Heart right ventricle (tissue), 16 donors: ENCODE measurements at regions of chr18 and their contacts with region 1.

Region 1: DNA sequence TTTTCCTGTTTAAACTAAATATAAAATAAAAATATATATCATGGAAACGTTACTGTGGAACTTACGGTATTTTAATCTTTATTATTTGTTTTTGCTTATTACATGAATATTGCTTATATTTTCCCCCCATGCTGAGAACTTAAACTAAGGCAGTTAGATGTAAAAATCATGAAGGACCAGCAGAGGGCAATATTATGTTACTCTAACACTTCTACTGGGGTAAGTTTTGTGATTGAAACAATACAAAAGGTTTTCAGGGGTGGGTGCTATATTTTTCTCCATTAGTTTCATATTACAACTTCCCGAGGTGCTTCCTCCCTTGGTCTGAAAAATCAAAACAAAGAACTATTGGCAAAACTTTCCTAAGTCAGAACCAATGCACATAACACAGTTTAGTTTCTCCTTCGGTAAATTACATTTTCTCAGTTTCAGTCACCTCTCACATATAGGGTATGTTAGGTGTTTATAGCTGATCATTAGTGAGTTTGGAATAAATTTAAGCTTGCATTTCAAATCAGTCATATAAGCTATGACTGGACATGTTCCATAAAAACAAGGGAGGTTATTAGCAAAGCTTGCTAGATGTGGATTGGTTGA is 54.8 kb downstream of the ZNF407 start:
- DNase-seq: no peak
- ATAC-seq: peak in 2 of 8 donors; percentile 27 to 37
- H3K4me3 ChIP-seq: no peak overlapping the region
- H3K27ac ChIP-seq: no peak overlapping the region
- H3K4me1 ChIP-seq: peaks cover 0 to 4% (median 0%) of the 10 kb centered on the region in 9 donors
- H3K27me3 ChIP-seq: no peaks in the 10 kb centered on the region
- CTCF ChIP-seq: peak; percentile 41 to 76 (median 65)

Region 2: DNA sequence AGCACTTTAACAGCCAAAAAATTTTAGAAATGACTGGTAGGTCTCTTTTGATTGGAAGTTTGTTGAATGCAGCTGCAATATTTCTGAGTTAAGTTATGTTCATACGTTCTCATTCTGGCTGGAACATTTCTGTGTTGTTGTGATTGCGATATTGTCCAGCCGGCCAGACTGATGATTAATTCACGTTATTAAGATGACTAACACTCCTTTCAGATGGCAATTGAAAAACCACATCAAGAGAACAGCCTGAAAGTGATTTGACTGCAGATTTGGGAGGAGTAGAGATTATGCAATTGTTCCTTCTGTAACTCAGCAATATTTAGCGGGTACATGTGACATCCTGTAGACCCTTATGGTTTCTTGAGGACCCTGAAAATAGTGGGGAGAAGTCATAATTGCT is 638.5 kb before region 1 on chr18:
- intact Hi-C with region 1: no loop called
- DNase-seq: no peak
- ATAC-seq: peak in 1 of 8 donors; percentile 70
- H3K4me3 ChIP-seq: no peak overlapping the region
- H3K27ac ChIP-seq: no peak overlapping the region
- H3K4me1 ChIP-seq: peaks cover 0 to 14% (median 0%) of the 10 kb centered on the region in 9 donors
- H3K27me3 ChIP-seq: no peaks in the 10 kb centered on the region
- CTCF ChIP-seq: no peak

Region 3: GRCh38 chr18:74604774-74605173 is 47.7 kb before region 1 on chr18:
- intact Hi-C with region 1: loop called in 1 of 10 experiments (anchors 5 kb)
- DNase-seq: no peak
- ATAC-seq: peak in 7 of 8 donors; percentile 29 to 76 (median 71)
- H3K4me3 ChIP-seq: no peak overlapping the region
- H3K27ac ChIP-seq: peak overlapping the region in 2 of 10 donors; percentile 22 to 45
- H3K4me1 ChIP-seq: peaks cover 0 to 20% (median 5%) of the 10 kb centered on the region in 9 donors
- H3K27me3 ChIP-seq: no peaks in the 10 kb centered on the region
- CTCF ChIP-seq: no peak

Region 4: GRCh38 chr18:74896390-74896991 is 244.0 kb after region 1 on chr18:
- intact Hi-C with region 1: loop called in 1 of 10 experiments (anchors 5 kb)
- DNase-seq: peak in 1 of 2 donors; percentile 12
- ATAC-seq: peak in 6 of 8 donors; percentile 58 to 86 (median 78)
- H3K4me3 ChIP-seq: no peak overlapping the region
- H3K27ac ChIP-seq: no peak overlapping the region
- H3K4me1 ChIP-seq: peaks cover 0 to 26% (median 0%) of the 10 kb centered on the region in 9 donors
- H3K27me3 ChIP-seq: no peaks in the 10 kb centered on the region
- CTCF ChIP-seq: peak in 8 of 9 donors; percentile 26 to 66 (median 58)

Region 5: GRCh38 chr18:74963820-74964446 is 311.4 kb after region 1 on chr18:
- intact Hi-C with region 1: loop called in 7 of 10 experiments (anchors 5 to 10 kb)
- DNase-seq: peak in 1 of 2 donors; percentile 61
- ATAC-seq: peak; percentile 68 to 93 (median 84)
- H3K4me3 ChIP-seq: no peak overlapping the region
- H3K27ac ChIP-seq: no peak overlapping the region
- H3K4me1 ChIP-seq: peaks cover 0 to 11% (median 4%) of the 10 kb centered on the region in 9 donors
- H3K27me3 ChIP-seq: no peaks in the 10 kb centered on the region
- CTCF ChIP-seq: peak in 7 of 9 donors; percentile 42 to 58 (median 52)

Region 6: GRCh38 chr18:75478996-75479880 is 826.7 kb after region 1 on chr18:
- intact Hi-C with region 1: loop called in 9 of 10 experiments (anchors 2 to 10 kb)
- DNase-seq: no peak
- ATAC-seq: peak in 7 of 8 donors; percentile 68 to 85 (median 71)
- H3K4me3 ChIP-seq: no peak overlapping the region
- H3K27ac ChIP-seq: no peak overlapping the region
- H3K4me1 ChIP-seq: no peaks in the 10 kb centered on the region
- H3K27me3 ChIP-seq: no peaks in the 10 kb centered on the region
- CTCF ChIP-seq: peak; percentile 29 to 90 (median 72)

Region 7: DNA sequence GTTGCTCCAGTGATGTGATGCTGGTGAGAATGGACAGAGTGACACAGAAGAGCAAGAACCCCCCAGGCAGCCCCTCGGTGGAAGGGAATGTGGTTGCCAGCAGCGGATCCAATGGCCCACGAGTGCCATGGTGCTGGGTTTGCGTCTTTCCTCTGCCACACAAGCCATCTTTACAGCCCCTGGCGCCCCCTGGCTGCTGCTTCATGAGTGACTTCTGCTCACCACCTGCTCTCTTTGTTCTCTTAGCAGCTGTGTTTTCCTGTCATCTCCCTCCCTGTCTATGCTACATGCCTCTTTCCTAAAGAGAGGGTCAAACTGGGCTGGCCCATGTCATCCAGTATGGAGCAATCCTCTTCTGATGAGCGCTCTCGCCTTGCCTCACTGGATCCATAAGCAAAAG is 1075.0 kb after region 1 on chr18:
- intact Hi-C with region 1: loop called in 3 of 10 experiments (anchors 10 kb)
- DNase-seq: peak; percentile 33 to 36
- ATAC-seq: peak in 3 of 8 donors; percentile 12 to 47 (median 41)
- H3K4me3 ChIP-seq: no peak overlapping the region
- H3K27ac ChIP-seq: no peak overlapping the region
- H3K4me1 ChIP-seq: no peaks in the 10 kb centered on the region
- H3K27me3 ChIP-seq: peaks cover 0 to 29% (median 0%) of the 10 kb centered on the region in 7 donors
- CTCF ChIP-seq: peak in 8 of 9 donors; percentile 28 to 64 (median 54)

Region 8: GRCh38 chr18:76349067-76349715 is 1696.7 kb after region 1 on chr18:
- intact Hi-C with region 1: loop called in 2 of 10 experiments (anchors 5 to 10 kb)
- DNase-seq: peak in 1 of 2 donors; percentile 56
- ATAC-seq: peak in 2 of 8 donors; percentile 20 to 21
- H3K4me3 ChIP-seq: peak overlapping the region in 3 of 10 donors; percentile 3 to 14 (median 9)
- H3K27ac ChIP-seq: no peak overlapping the region
- H3K4me1 ChIP-seq: peaks cover 0 to 19% (median 7%) of the 10 kb centered on the region in 9 donors
- H3K27me3 ChIP-seq: peaks cover 0 to 5% (median 0%) of the 10 kb centered on the region in 7 donors
- CTCF ChIP-seq: peak; percentile 64 to 90 (median 86)